ENCODE measurements at regions of chr17 and their contacts with region 1.

Region 1: GRCh38 chr17:62724398-62725146 is 83.5 kb downstream of the MARCHF10 start:
- DNase-seq: peak; percentile 93
- H3K4me3 Mint-ChIP-seq: no peak overlapping the region
- H3K27ac Mint-ChIP-seq: peak overlapping the region; percentile 25
- H3K4me1 Mint-ChIP-seq: peaks cover 23% of the 10 kb centered on the region
- H3K27me3 Mint-ChIP-seq: peaks cover 48% of the 10 kb centered on the region

Region 2: GRCh38 chr17:62653002-62653825 is 71.4 kb before region 1 on chr17:
- CTCF ChIA-PET with region 1: interaction called, 3 read pairs
- intact Hi-C with region 1: loop called (anchors 1 kb)
- DNase-seq: peak; percentile 98
- H3K4me3 Mint-ChIP-seq: peak overlapping the region; percentile 76
- H3K27ac Mint-ChIP-seq: peak overlapping the region; percentile 69
- H3K4me1 Mint-ChIP-seq: peaks cover 19% of the 10 kb centered on the region
- H3K27me3 Mint-ChIP-seq: peaks cover 39% of the 10 kb centered on the region

Region 3: GRCh38 chr17:62703775-62704378 is 20.7 kb before region 1 on chr17:
- CTCF ChIA-PET with region 1: interaction called, 4 read pairs
- intact Hi-C with region 1: loop called (anchors 1 kb)
- DNase-seq: peak; percentile 71
- H3K4me3 Mint-ChIP-seq: peak overlapping the region; percentile 34
- H3K27ac Mint-ChIP-seq: no peak overlapping the region
- H3K4me1 Mint-ChIP-seq: peaks cover 4% of the 10 kb centered on the region
- H3K27me3 Mint-ChIP-seq: peaks cover 34% of the 10 kb centered on the region

Region 4: DNA sequence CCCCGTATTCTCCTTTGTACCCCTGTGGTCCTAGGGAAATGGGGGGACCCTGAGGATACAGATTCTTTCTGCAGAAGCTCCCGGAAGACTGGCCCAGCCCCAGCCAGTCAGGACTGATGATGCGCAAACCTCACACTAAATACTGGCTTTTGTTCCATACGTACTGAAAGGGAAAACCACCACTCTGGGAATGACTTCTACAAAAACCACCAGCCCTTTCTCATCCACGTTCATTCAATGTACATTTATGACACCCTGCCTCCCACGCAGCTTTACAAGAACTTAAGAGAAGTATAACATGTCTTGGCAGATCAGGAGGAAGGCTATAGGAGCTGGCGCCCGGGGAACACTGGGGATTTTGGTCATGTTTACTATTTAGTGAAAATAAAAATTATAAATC is 12.9 kb after region 1 on chr17:
- CTCF ChIA-PET with region 1: interaction called, 3 read pairs
- intact Hi-C with region 1: loop called (anchors 1 kb)
- DNase-seq: peak; percentile 62
- H3K4me3 Mint-ChIP-seq: no peak overlapping the region
- H3K27ac Mint-ChIP-seq: no peak overlapping the region
- H3K4me1 Mint-ChIP-seq: peaks cover 12% of the 10 kb centered on the region
- H3K27me3 Mint-ChIP-seq: peaks cover 3% of the 10 kb centered on the region

Region 5: GRCh38 chr17:62840860-62841259 is 116.3 kb after region 1 on chr17:
- CTCF ChIA-PET with region 1: no interaction called
- intact Hi-C with region 1: no loop called
- DNase-seq: no peak
- H3K4me3 Mint-ChIP-seq: no peak overlapping the region
- H3K27ac Mint-ChIP-seq: no peak overlapping the region
- H3K4me1 Mint-ChIP-seq: no peaks in the 10 kb centered on the region
- H3K27me3 Mint-ChIP-seq: peaks cover 13% of the 10 kb centered on the region

Region 6: GRCh38 chr17:62892870-62893338 is 168.3 kb after region 1 on chr17:
- CTCF ChIA-PET with region 1: no interaction called
- intact Hi-C with region 1: loop called (anchors 1 kb)
- DNase-seq: peak; percentile 64
- H3K4me3 Mint-ChIP-seq: no peak overlapping the region
- H3K27ac Mint-ChIP-seq: peak overlapping the region; percentile 12
- H3K4me1 Mint-ChIP-seq: peaks cover 9% of the 10 kb centered on the region
- H3K27me3 Mint-ChIP-seq: peaks cover 3% of the 10 kb centered on the region

Region 7: GRCh38 chr17:63275318-63275970 is 550.9 kb after region 1 on chr17:
- CTCF ChIA-PET with region 1: no interaction called
- intact Hi-C with region 1: loop called (anchors 1 kb)
- DNase-seq: peak; percentile 52
- H3K4me3 Mint-ChIP-seq: no peak overlapping the region
- H3K27ac Mint-ChIP-seq: no peak overlapping the region
- H3K4me1 Mint-ChIP-seq: peaks cover 32% of the 10 kb centered on the region
- H3K27me3 Mint-ChIP-seq: no peaks in the 10 kb centered on the region

Measured in activated naive CD4-positive, alpha-beta T cell treated with anti-CD3 and anti-CD28 coated beads for 36 hours (primary cell).